Sigmoid colon (tissue), 7 donors: ENCODE measurements at regions of chr2 and their contacts with region 1.

Region 1: DNA sequence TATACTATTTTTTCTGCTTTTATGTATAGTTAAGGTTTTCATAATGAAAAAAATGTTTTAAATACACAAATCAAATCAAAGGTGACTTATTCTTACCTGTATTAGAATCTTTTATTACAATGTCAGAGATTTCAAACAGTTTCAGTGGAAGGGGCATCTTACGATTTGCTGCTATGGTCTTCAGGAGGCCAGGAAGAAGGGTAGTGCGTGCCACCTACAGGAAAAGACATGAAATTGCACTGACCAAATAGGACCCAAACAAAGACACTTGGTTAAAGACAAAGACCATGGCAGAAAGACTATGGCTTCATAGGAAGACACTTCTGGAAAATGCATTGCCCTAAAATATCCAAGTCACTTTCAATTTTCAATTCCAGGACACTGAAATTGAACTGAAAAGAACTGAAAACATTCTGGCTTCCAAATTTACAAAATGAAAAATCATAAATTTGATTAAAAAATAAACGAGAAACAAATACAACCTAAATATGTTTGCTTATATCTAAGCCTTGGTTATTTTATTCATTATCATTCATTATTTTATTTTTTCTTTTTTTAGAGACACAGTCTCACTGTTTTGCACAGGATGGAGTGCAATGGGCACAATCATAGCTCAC is 42.1 kb downstream of the FARSB start:
- DNase-seq: no peak
- H3K4me3 ChIP-seq: no peak overlapping the region
- H3K27ac ChIP-seq: no peak overlapping the region
- H3K4me1 ChIP-seq: peaks cover 0 to 7% (median 0%) of the 10 kb centered on the region in 4 donors
- H3K27me3 ChIP-seq: no peaks in the 10 kb centered on the region
- CTCF ChIP-seq: peak; percentile 31 to 74 (median 64)
- EP300 ChIP-seq: no peak
- POLR2A ChIP-seq: no peak

Region 2: GRCh38 chr2:222057347-222058073 is 556.3 kb before region 1 on chr2:
- intact Hi-C with region 1: loop called (anchors 5 kb)
- DNase-seq: no peak
- H3K4me3 ChIP-seq: no peak overlapping the region
- H3K27ac ChIP-seq: no peak overlapping the region
- H3K4me1 ChIP-seq: peaks cover 0 to 4% (median 0%) of the 10 kb centered on the region in 4 donors
- H3K27me3 ChIP-seq: peaks cover 0 to 63% (median 0%) of the 10 kb centered on the region in 3 donors
- CTCF ChIP-seq: peak; percentile 9 to 62 (median 42)
- EP300 ChIP-seq: no peak
- POLR2A ChIP-seq: no peak

Region 3: GRCh38 chr2:222318026-222318711 is 295.7 kb before region 1 on chr2:
- intact Hi-C with region 1: loop called (anchors 2 kb)
- DNase-seq: no peak
- H3K4me3 ChIP-seq: peak overlapping the region; percentile 27 to 67 (median 50)
- H3K27ac ChIP-seq: peak overlapping the region in 2 of 4 donors; percentile 51 to 85
- H3K4me1 ChIP-seq: peaks cover 0 to 26% (median 22%) of the 10 kb centered on the region in 4 donors
- H3K27me3 ChIP-seq: peaks cover 12 to 65% (median 32%) of the 10 kb centered on the region in 3 donors
- CTCF ChIP-seq: peak; percentile 19 to 44 (median 38)
- EP300 ChIP-seq: no peak
- POLR2A ChIP-seq: no peak

Region 4: DNA sequence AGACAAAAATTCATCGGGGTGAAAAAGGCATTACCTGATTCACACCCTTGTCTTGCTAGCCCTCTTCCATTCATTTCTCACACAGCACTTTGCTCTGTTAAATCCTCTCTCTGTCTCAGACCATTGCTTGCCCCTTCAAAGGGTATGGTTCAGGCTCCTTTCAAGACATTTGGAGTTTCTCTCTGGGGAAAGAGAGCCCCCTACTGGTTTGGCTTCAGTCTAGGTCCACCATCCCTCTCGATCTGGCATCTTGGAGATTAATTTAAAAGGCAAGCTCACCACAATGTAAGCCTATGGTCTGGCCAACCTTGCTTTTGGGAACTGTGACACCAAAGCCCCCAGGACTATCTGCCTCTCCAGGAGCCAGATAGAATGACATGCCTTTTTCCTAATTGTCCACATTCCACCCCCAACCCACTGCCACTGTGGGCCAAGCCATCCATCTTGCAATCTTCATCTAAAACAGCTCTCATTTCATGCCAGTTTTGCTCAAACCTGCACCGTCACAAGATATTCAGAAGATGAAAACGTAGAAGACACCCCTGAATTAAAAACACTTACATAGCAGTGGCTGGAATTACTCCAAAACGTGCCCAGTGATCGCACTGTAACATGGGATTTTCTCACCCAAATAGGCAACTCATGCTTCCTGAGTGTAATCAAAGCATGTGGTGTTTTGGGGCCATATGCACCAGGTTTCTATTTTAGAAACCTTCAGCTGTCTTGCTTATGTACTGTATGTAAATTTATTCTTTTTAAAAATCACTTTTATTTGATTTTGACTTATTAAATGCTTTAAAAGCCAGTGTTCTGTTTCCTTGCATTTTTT is 51.8 kb before region 1 on chr2:
- intact Hi-C with region 1: loop called (anchors 5 kb)
- DNase-seq: no peak
- H3K4me3 ChIP-seq: no peak overlapping the region
- H3K27ac ChIP-seq: no peak overlapping the region
- H3K4me1 ChIP-seq: no peaks in the 10 kb centered on the region
- H3K27me3 ChIP-seq: no peaks in the 10 kb centered on the region
- CTCF ChIP-seq: peak; percentile 32 to 69 (median 46)
- EP300 ChIP-seq: no peak
- POLR2A ChIP-seq: no peak

Region 5: DNA sequence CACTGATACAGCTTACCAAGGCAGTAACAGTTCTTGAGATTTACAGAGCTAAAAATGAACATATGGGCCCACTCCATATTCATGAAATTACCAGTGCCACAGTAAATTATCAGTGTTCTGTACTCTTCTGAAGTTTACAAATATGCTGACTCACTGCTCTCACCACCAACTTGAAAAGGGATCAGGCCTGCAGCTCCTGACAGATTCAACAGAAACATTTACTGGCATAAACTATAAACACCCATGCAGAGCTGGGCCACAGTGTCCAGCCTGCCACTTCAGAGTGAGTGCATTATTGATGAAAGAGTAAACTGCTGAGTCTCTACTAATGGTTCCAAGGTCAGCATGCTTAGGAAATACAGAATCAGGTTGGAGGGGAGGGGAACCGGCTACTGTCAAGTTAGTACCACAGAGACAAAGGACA is 41.1 kb before region 1 on chr2:
- intact Hi-C with region 1: loop called (anchors 5 kb)
- DNase-seq: no peak
- H3K4me3 ChIP-seq: no peak overlapping the region
- H3K27ac ChIP-seq: peak overlapping the region; percentile 43 to 79 (median 71)
- H3K4me1 ChIP-seq: peaks cover 0 to 94% (median 63%) of the 10 kb centered on the region in 4 donors
- H3K27me3 ChIP-seq: no peaks in the 10 kb centered on the region
- CTCF ChIP-seq: no peak
- EP300 ChIP-seq: no peak
- POLR2A ChIP-seq: no peak